ENCODE measurements at regions of chr10 and their contacts with region 1.

Region 1: GRCh38 chr10:18472977-18473376 is 178.4 kb downstream of the NSUN6 start:
- DNase-seq: no peak
- H3K4me3 ChIP-seq: peak overlapping the region; percentile 31 to 43
- H3K27ac ChIP-seq: peak overlapping the region; percentile 68 to 78
- H3K4me1 ChIP-seq: peaks cover 0 to 10% of the 10 kb centered on the region in 2 donors
- H3K27me3 ChIP-seq: no peaks in the 10 kb centered on the region
- CTCF ChIP-seq: no peak

Region 2: DNA sequence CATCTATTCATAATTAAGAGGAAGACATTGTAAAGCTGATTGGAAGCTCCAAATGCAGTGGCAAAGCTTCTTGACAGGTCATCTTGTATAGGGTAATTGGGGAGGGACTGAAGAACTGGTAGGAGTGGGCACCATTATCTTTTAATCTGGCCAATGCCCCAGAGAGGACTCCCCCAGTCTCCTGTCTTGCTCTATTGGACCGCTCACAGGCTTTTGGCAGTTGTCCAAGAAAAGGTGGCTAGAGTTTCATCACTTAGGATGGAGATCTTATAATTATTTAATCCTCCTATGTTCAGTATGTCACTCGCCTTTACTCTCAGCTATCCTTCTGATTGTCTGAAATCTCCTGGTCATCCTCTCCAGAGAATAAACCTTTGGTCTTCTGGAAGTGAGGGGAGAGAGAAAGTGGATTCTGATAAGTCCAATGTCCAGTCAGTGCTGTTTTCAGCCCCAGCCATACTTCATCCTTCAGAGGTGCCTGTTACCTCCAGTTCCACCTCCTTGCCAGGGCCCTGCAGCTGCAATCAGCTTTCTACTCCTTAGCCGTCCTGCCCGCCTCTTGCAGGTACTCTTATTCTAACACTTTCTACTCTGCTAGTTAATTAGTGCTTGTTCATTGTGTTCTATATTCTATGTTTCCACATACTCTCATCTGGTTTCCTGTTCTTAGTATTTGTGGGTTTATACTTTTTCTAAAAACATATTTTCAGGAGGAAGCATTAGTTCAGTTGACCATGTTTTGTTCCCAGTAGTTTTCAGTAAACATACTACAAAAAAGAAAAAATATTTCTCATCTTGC is 63.2 kb before region 1 on chr10:
- intact Hi-C with region 1: loop called (anchors 5 kb)
- DNase-seq: no peak
- H3K4me3 ChIP-seq: no peak overlapping the region
- H3K27ac ChIP-seq: no peak overlapping the region
- H3K4me1 ChIP-seq: peaks cover 0 to 4% of the 10 kb centered on the region in 2 donors
- H3K27me3 ChIP-seq: no peaks in the 10 kb centered on the region
- CTCF ChIP-seq: no peak

Region 3: GRCh38 chr10:18651324-18652007 is 178.5 kb after region 1 on chr10 and contains the start of gene NSUN6:
- intact Hi-C with region 1: loop called (anchors 5 kb)
- DNase-seq: peak; percentile 64 to 95
- H3K4me3 ChIP-seq: peak within 1 kb of the TSS; percentile 69 to 73
- H3K27ac ChIP-seq: peak within 1 kb of the TSS; percentile 87 to 89
- H3K4me1 ChIP-seq: peaks cover 0 to 13% of the 10 kb centered on the region in 2 donors
- H3K27me3 ChIP-seq: no peaks in the 10 kb centered on the region
- CTCF ChIP-seq: no peak
- total RNA-seq, gene NSUN6: 5.4 TPM